MCF 10A (cell line): ENCODE measurements at regions of chr6 and their contacts with region 1.

Region 1: DNA sequence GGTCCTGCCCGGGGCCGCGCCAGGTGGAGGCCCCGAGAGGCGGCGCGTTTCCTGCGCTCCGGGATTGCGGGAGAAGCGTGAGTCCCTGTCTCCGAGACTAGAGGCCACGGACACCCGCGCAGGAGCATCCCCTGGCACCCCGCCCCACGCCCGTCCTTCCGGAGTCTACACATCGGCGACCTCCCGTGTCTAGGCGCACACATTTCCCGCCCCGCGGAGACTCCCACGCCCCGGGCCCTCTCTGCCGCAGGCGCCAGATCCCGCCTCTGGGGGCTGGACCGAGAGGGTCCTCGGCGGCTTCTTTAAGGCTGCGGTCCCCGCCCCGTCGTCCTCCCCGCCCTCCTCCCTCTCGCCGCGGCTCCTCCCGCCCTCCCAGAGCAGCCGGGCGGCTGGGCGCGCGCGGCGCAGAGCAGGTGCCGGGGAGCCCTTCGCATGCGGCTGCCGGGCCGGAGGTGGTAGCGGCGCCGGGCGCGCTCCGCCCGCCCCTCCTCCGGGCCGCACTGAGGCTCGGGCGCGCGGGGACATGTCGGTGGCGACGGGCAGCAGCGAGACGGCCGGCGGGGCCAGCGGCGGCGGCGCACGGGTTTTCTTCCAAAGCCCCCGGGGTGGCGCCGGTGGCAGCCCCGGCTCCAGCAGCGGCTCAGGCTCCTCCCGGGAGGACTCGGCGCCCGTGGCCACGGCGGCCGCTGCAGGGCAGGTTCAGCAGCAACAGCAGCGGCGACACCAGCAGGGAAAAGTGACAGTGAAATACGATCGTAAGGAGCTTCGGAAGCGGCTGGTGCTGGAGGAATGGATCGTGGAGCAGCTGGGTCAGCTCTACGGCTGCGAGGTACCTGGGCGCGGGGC is at the start of gene PPP1R14C:
- DNase-seq: peak; percentile 65
- H3K4me3 Mint-ChIP-seq: peak within 1 kb of the TSS; percentile 83
- H3K27ac Mint-ChIP-seq: peak within 1 kb of the TSS; percentile 96
- H3K4me1 Mint-ChIP-seq: peaks cover 35% of the 10 kb centered on the region
- H3K27me3 Mint-ChIP-seq: no peaks in the 10 kb centered on the region
- CTCF ChIP-seq: no peak
- total RNA-seq, gene PPP1R14C: 32.0 and 38.7 TPM in 2 replicates

Region 2: DNA sequence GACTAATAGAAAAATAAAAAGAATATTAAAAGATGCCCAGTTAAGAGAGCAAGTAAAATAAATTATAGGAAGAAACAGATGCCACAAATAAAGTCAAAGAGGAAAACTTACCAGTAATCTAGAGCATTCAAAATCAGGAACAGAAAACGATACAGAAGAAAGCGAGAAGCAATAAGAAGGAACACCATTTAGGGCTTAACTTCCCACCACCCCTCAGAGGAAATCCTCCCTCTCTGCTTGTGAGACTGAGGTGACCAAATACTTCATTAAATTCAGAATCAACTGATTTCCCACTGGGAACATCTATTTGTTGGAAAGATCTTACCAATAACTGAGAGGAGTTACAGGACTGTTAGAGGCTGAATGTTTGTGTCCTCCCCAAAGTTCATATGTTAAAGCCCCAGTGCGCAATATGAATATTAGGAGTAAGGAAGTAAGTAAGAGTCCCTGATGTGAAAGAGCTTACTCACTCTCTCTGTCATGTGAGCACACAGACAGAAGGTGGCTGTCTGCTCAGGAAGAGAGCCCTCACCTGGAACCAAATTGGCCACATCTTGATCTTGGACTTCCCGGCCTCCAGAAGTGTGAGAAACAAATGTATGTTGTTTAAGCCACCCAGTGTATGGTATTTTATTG is 513.9 kb before region 1 on chr6:
- CTCF ChIA-PET with region 1: no interaction called
- POLR2A ChIA-PET with region 1: no interaction called
- intact Hi-C with region 1: no loop called
- DNase-seq: no peak
- H3K4me3 Mint-ChIP-seq: no peak overlapping the region
- H3K27ac Mint-ChIP-seq: no peak overlapping the region
- H3K4me1 Mint-ChIP-seq: no peaks in the 10 kb centered on the region
- H3K27me3 Mint-ChIP-seq: no peaks in the 10 kb centered on the region
- CTCF ChIP-seq: no peak

Region 3: GRCh38 chr6:150068720-150069648 is 73.9 kb before region 1 on chr6 and contains the start of gene ULBP3:
- CTCF ChIA-PET with region 1: interaction called, 4 read pairs
- POLR2A ChIA-PET with region 1: interaction called, 10 read pairs
- intact Hi-C with region 1: no loop called
- DNase-seq: peak; percentile 98
- H3K4me3 Mint-ChIP-seq: peak within 1 kb of the TSS; percentile 77
- H3K27ac Mint-ChIP-seq: no peak within 1 kb of the TSS
- H3K4me1 Mint-ChIP-seq: peaks cover 28% of the 10 kb centered on the region
- H3K27me3 Mint-ChIP-seq: no peaks in the 10 kb centered on the region
- CTCF ChIP-seq: peak; percentile 34
- total RNA-seq, gene ULBP3: 4.9 and 6.3 TPM in 2 replicates

Region 4: DNA sequence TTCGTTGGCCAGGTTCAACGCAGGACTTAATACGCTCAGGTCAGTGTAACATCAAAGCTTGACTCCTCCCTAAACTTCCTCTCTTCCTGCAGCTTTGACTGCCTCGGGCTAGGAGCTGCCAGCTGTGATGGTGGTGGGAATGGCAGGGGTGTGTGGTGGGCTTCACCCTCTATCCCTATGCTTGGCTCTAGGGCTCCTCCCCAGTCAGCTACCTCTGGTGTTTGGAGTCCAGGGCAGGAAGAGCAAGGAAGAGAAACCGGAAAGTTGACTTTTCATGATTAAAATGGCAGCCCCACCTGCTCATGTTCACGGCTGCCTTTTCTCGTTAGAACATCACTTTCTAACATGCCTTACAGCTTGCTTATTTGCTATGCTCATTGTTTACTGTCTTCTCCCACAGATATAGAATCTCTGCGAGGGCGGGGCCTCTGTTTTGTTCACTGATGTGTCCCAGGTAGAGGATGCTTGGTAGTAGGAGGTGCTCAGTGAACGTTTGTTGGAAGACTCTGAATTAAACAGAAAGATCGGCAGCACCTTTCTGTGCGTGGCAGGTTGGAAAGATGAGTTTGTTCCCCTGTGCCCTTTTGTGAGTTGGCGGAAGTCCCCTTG is 16.1 kb before region 1 on chr6:
- CTCF ChIA-PET with region 1: no interaction called
- POLR2A ChIA-PET with region 1: no interaction called
- intact Hi-C with region 1: no loop called
- DNase-seq: no peak
- H3K4me3 Mint-ChIP-seq: no peak overlapping the region
- H3K27ac Mint-ChIP-seq: no peak overlapping the region
- H3K4me1 Mint-ChIP-seq: no peaks in the 10 kb centered on the region
- H3K27me3 Mint-ChIP-seq: no peaks in the 10 kb centered on the region
- CTCF ChIP-seq: no peak

Region 5: GRCh38 chr6:150169609-150170008 is 26.7 kb after region 1 on chr6:
- CTCF ChIA-PET with region 1: no interaction called
- POLR2A ChIA-PET with region 1: interaction called, 30 read pairs
- intact Hi-C with region 1: no loop called
- DNase-seq: peak; percentile 73
- H3K4me3 Mint-ChIP-seq: no peak overlapping the region
- H3K27ac Mint-ChIP-seq: peak overlapping the region; percentile 69
- H3K4me1 Mint-ChIP-seq: peaks cover 11% of the 10 kb centered on the region
- H3K27me3 Mint-ChIP-seq: no peaks in the 10 kb centered on the region
- CTCF ChIP-seq: no peak

Region 6: DNA sequence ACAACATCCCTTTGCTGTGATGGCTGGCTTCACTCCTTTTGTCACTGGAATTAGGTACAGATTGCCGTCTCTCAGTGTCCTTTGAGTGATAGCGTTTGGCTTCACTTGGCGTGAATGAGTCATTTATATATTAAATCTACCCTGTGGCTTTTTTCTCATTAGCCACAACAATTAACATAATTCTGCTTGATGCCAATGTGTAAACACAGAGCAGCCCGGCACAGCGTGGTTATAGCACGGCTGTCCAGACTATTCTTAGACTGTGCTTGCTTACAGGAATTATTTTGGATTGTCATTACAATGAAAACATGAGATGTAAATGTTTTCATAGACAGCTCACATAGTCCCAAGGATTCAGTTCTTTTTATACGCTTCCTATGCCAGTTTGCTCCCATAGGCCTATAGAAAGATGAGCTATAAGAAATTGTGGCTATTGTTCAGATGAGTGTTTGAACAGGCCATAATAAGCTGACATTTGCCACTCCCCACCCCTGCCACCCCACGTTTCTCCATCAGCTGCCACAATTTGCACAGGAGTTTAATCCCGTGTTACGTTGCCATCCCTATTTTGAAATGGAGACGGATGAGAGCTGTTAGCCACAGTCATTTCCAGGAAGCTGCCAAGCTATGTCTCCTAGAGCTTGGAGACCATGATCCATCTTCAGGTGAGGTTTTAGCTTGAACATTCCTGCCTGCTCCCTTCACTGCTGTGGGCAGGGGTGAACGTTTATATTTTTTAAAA is 65.9 kb after region 1 on chr6:
- CTCF ChIA-PET with region 1: no interaction called
- POLR2A ChIA-PET with region 1: interaction called, 12 read pairs
- intact Hi-C with region 1: loop called (anchors 5 kb)
- DNase-seq: no peak
- H3K4me3 Mint-ChIP-seq: no peak overlapping the region
- H3K27ac Mint-ChIP-seq: peak overlapping the region; percentile 14
- H3K4me1 Mint-ChIP-seq: peaks cover 28% of the 10 kb centered on the region
- H3K27me3 Mint-ChIP-seq: no peaks in the 10 kb centered on the region
- CTCF ChIP-seq: no peak

Region 7: DNA sequence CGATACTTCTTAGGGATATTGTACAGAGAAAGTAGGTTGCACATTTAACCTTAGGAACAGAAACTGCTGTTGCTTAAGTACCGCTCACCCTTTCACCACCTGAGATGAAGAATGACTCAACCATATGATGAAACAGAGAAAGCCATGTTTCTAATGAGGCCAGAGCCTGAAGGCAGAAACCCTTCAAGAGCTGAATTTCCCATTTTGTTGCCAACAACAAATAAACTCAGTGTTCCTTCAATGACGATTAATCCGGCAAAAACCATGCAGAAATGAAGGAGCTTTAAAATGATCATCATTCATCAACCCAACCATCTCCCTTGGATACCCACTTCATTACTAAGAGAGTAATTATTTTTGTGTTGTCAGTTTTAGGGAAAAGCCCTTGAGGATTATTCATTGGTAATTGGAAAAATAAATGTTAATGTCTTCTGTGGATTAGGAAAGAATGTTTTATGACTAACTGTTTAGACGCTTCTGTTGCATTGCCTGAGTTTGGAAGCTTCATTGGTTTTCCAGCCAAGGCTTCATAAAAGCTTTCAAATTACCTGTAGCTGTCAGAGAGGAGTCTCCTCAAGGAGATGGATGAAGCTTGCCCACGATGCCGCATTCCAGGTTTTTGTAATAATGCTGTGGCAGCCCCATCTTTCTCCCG is 113.9 kb after region 1 on chr6:
- CTCF ChIA-PET with region 1: interaction called, 10 read pairs
- POLR2A ChIA-PET with region 1: interaction called, 246 read pairs
- intact Hi-C with region 1: loop called (anchors 1 kb)
- DNase-seq: peak; percentile 97
- H3K4me3 Mint-ChIP-seq: peak overlapping the region; percentile 44
- H3K27ac Mint-ChIP-seq: peak overlapping the region; percentile 93
- H3K4me1 Mint-ChIP-seq: peaks cover 48% of the 10 kb centered on the region
- H3K27me3 Mint-ChIP-seq: no peaks in the 10 kb centered on the region
- CTCF ChIP-seq: no peak

Region 8: GRCh38 chr6:150334790-150335783 is 192.2 kb after region 1 on chr6:
- CTCF ChIA-PET with region 1: interaction called, 3 read pairs
- POLR2A ChIA-PET with region 1: interaction called, 5 read pairs
- intact Hi-C with region 1: loop called (anchors 1 kb)
- DNase-seq: peak; percentile 76
- H3K4me3 Mint-ChIP-seq: no peak overlapping the region
- H3K27ac Mint-ChIP-seq: peak overlapping the region; percentile 4
- H3K4me1 Mint-ChIP-seq: peaks cover 18% of the 10 kb centered on the region
- H3K27me3 Mint-ChIP-seq: no peaks in the 10 kb centered on the region
- CTCF ChIP-seq: peak; percentile 82